Psoas muscle (tissue), 8 donors: ENCODE measurements at regions of chr7 and their contacts with region 1.

Region 1: DNA sequence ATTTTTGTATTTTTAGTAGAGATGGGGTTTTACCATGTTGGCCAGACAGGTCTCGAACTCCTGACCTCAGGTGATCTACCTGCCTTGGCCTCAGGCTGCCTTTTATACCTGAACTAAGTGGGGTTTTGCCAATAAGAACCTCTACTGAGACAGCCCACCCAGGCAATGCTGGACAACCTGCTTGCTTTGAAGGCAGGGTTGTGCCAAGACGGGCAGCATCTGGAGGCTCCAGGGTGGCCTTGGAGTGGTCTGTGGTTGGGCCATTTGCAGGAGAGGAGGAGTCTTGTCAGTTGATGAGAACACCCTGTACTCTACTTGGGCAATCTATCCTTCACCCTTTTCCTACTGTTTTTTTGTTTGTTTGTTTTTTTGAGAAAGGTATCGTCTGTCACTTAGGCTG is 75.3 kb upstream of the ZNF735 start:
- DNase-seq: no peak
- ATAC-seq: no peak
- H3K4me3 ChIP-seq: no peak overlapping the region
- H3K27ac ChIP-seq: no peak overlapping the region
- H3K4me1 ChIP-seq: no peaks in the 10 kb centered on the region
- H3K27me3 ChIP-seq: no peaks in the 10 kb centered on the region
- CTCF ChIP-seq: no peak

Region 2: DNA sequence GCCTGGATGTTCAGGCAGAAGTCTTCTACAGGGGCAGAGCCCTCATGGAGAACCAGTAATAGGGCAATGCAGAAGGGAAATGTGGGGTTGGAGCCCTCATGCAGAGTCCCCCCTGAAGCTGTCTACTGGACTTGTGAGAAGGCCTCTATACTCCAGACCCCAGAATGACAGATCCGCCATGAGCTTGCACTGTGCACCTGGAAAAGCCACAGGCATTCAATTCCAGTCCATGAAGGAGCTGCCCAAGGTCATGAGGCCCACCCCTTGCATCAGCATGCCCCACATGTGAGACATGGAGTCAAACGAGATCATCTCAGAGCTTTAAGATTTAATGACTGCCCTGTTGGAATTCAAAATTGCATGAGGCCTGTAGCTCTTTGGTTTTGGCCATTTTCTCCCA is 91.7 kb after region 1 on chr7:
- intact Hi-C with region 1: no loop called
- DNase-seq: no peak
- ATAC-seq: no peak
- H3K4me3 ChIP-seq: no peak overlapping the region
- H3K27ac ChIP-seq: no peak overlapping the region
- H3K4me1 ChIP-seq: no peaks in the 10 kb centered on the region
- H3K27me3 ChIP-seq: no peaks in the 10 kb centered on the region
- CTCF ChIP-seq: no peak

Region 3: DNA sequence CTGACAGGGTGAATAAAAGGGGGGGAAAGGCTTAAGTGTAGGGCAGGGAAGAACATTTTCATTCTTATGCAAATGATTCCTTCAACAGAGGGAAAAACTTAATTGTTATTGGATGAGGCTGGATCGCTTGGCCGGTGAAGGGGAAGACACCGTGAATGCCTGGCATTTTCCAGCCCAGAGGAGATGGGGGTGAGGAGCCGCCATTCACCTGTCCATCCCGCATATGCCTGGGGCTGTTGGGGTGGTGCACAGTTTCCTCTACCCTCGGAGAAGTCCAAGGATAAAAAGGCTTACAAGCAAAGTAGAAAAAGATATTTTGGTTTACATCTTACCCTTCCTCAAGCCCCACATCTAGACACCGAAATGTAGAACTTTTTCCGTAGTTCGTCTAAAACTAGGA is 235.2 kb after region 1 on chr7:
- intact Hi-C with region 1: loop called in 1 of 2 experiments (anchors 10 kb)
- DNase-seq: no peak
- ATAC-seq: no peak
- H3K4me3 ChIP-seq: no peak overlapping the region
- H3K27ac ChIP-seq: no peak overlapping the region
- H3K4me1 ChIP-seq: no peaks in the 10 kb centered on the region
- H3K27me3 ChIP-seq: no peaks in the 10 kb centered on the region
- CTCF ChIP-seq: no peak